Aorta (tissue), 5 donors: ENCODE measurements at regions of chr6 and their contacts with region 1.

Region 1: DNA sequence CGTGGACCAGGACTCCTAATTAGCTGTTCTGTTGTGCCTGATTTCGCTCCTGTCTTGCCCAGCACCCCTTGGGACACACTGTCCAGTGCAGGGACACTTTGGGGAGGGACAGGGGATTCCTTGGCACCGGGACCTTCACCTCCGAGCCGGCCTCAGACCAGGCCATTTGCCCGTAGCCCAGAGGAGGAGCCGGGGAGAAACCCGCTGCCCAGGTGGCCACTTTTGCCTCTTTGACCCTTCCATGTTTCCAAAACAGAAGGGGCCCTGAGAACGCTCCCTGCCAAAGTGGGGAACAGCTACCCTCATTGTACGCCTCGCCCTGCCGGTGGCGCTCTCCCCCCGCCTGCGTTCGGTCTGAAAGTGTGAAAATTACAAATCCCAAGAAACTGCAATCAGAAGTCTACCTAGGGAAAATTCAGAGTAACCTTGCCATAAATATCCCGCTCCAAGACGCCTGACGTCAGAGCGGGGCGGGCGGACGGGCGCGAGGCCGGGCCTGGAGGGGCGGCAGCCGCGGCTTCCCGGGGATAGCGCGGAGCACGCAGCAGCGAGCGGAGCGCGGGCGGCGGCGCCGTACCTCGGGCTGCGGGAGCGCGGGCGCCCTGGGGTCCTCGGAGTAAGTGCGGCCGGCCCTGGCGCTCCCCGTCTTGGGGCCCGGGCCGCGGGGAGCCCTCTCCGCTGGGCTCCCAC is at the start of gene DAAM2:
- DNase-seq: peak; percentile 73 to 92
- ATAC-seq: peak; percentile 87
- H3K4me3 ChIP-seq: peak within 1 kb of the TSS; percentile 78 to 89
- H3K27ac ChIP-seq: peak within 1 kb of the TSS; percentile 73 to 92
- H3K4me1 ChIP-seq: peaks cover 2 to 12% of the 10 kb centered on the region in 2 donors
- H3K27me3 ChIP-seq: no peaks in the 10 kb centered on the region
- total RNA-seq, gene DAAM2: 61.5 to 62.1 TPM

Region 2: DNA sequence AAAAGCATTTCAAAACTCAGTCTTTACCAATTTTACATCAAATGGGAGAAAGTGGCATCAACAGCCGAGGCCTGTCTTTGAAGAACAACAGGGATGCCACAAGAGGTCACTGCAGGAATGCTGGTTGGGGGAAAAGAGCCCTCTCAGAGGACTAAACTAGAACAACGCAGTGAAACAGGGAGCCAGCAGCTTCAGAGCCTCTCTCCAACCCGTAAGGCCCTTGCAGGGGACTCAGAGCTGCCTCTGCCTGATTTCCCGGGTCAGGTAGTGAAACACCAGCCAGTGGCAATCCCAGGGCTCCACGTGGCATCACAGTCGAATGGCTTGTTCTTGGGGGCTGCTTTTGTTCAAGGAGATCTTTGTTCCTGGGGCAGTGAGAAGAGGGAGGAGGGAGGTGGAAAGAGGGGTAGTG is 414.4 kb before region 1 on chr6:
- intact Hi-C with region 1: loop called in 1 of 2 experiments (anchors 10 kb)
- DNase-seq: no peak
- ATAC-seq: peak; percentile 77
- H3K4me3 ChIP-seq: no peak overlapping the region
- H3K27ac ChIP-seq: no peak overlapping the region
- H3K4me1 ChIP-seq: no peaks in the 10 kb centered on the region
- H3K27me3 ChIP-seq: no peaks in the 10 kb centered on the region

Region 3: GRCh38 chr6:39634646-39635341 is 157.2 kb before region 1 on chr6:
- intact Hi-C with region 1: no loop called
- DNase-seq: no peak
- ATAC-seq: no peak
- H3K4me3 ChIP-seq: no peak overlapping the region
- H3K27ac ChIP-seq: no peak overlapping the region
- H3K4me1 ChIP-seq: no peaks in the 10 kb centered on the region
- H3K27me3 ChIP-seq: no peaks in the 10 kb centered on the region

Region 4: GRCh38 chr6:39714802-39715201 is 77.2 kb before region 1 on chr6:
- intact Hi-C with region 1: no loop called
- DNase-seq: no peak
- ATAC-seq: no peak
- H3K4me3 ChIP-seq: no peak overlapping the region
- H3K27ac ChIP-seq: no peak overlapping the region
- H3K4me1 ChIP-seq: no peaks in the 10 kb centered on the region
- H3K27me3 ChIP-seq: no peaks in the 10 kb centered on the region

Region 5: GRCh38 chr6:39724787-39725631 is 67.0 kb before region 1 on chr6 and contains the start of gene KIF6:
- intact Hi-C with region 1: loop called in 1 of 2 experiments (anchors 2 kb)
- DNase-seq: peak; percentile 95 to 97
- ATAC-seq: peak; percentile 97
- H3K4me3 ChIP-seq: peak within 1 kb of the TSS; percentile 56 to 82
- H3K27ac ChIP-seq: no peak within 1 kb of the TSS
- H3K4me1 ChIP-seq: no peaks in the 10 kb centered on the region
- H3K27me3 ChIP-seq: no peaks in the 10 kb centered on the region
- total RNA-seq, gene KIF6: 0.39 to 0.42 TPM

Region 6: GRCh38 chr6:39850736-39851297 is 58.8 kb after region 1 on chr6:
- intact Hi-C with region 1: loop called in 1 of 2 experiments (anchors 5 kb)
- DNase-seq: no peak
- ATAC-seq: no peak
- H3K4me3 ChIP-seq: no peak overlapping the region
- H3K27ac ChIP-seq: no peak overlapping the region
- H3K4me1 ChIP-seq: peaks cover 9 to 13% of the 10 kb centered on the region in 2 donors
- H3K27me3 ChIP-seq: no peaks in the 10 kb centered on the region

Region 7: DNA sequence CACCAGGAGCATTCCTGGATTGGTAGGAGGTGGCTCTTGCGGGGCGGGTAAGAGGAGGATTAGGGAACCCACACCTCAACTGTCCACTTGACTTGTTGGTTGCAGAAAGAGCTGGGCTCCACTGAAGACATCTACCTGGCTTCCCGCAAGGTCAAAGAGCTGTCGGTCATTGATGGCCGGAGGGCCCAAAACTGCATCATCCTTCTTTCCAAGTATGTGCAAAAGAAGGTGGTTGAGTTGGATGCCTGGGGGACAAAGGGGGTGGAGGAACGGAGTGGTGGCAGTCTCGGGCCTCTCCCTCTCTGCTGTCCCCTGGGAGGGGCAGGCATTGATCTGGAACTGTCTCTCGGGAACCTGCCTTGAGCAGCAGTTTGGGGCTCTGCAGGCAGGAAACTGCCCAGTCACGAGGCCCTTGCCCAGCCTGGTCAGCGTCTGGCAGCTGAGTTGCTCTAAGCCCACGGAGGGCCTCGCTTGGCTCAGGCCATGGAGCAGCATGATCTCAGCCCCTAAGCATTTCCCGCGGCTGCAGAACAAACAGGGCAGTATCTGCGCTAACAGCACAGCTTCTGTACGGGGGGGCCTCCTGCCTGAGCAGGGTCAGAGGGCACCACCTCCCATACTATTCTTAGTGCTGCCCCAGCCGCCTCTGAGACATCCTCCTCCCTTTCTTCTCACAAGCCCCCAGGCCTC is 95.5 kb after region 1 on chr6:
- intact Hi-C with region 1: loop called (anchors 5 kb)
- DNase-seq: peak; percentile 95 to 96
- ATAC-seq: peak; percentile 92
- H3K4me3 ChIP-seq: no peak overlapping the region
- H3K27ac ChIP-seq: peak overlapping the region; percentile 87 to 94
- H3K4me1 ChIP-seq: peaks cover 0 to 3% of the 10 kb centered on the region in 2 donors
- H3K27me3 ChIP-seq: no peaks in the 10 kb centered on the region